PC-9 (cell line): ENCODE measurements at regions of chr20 and their contacts with region 1.

Region 1: DNA sequence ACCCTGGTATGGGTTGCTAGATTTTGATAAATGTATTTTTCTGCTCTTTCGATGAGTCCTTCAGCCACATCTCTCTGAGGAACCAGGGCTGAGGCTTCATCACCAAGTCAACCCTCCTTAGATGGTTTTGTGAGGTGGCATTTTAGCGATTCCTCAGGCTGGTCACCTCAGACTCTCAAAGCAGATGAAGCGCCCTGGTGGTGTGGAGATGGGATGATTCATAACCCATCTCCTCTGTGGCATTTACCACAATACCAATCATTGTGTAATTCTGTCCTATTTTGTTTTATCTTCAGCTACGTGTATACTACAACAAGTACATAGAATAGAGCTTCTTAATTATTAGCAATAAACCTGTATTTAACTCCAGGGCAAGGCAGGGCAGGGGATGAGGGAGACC is 57.7 kb upstream of the EDN3 start:
- DNase-seq: peak in 1 of 2 experiments; percentile 9
- H3K4me3 ChIP-seq: no peak overlapping the region
- H3K27ac ChIP-seq: no peak overlapping the region
- H3K4me1 ChIP-seq: no peaks in the 10 kb centered on the region
- H3K27me3 ChIP-seq: peaks cover 97% of the 10 kb centered on the region
- CTCF ChIP-seq: no peak

Region 2: GRCh38 chr20:58342104-58342960 is 900.4 kb before region 1 on chr20:
- CTCF ChIA-PET with region 1: no interaction called
- POLR2A ChIA-PET with region 1: interaction called, 33 read pairs
- intact Hi-C with region 1: no loop called
- DNase-seq: peak; percentile 31 to 92
- H3K4me3 ChIP-seq: no peak overlapping the region; the same call in 1 of the 2 replicates
- H3K27ac ChIP-seq: peak overlapping the region; percentile 71
- H3K4me1 ChIP-seq: peaks cover 48% of the 10 kb centered on the region
- H3K27me3 ChIP-seq: no peaks in the 10 kb centered on the region
- CTCF ChIP-seq: no peak